ENCODE measurements at regions of chr19 and their contacts with region 1.

Region 1: GRCh38 chr19:13597640-13598039 is 91.4 kb upstream of the CACNA1A start:
- DNase-seq: peak; percentile 43 to 60 (median 49)
- H3K4me3 ChIP-seq: no peak overlapping the region
- H3K4me3 Mint-ChIP-seq: no peak overlapping the region
- H3K27ac ChIP-seq: no peak overlapping the region
- H3K27ac Mint-ChIP-seq: no peak overlapping the region
- H3K4me1 ChIP-seq: no peaks in the 10 kb centered on the region
- H3K4me1 Mint-ChIP-seq: no peaks in the 10 kb centered on the region
- H3K27me3 ChIP-seq: no peaks in the 10 kb centered on the region
- H3K27me3 Mint-ChIP-seq: peaks cover 2 to 10% (median 6%) of the 10 kb centered on the region in 3 donors
- CTCF ChIP-seq: peak; percentile 67

Region 2: GRCh38 chr19:13718733-13719132 is 121.1 kb after region 1 on chr19:
- intact Hi-C with region 1: loop called (anchors 2 to 5 kb)
- DNase-seq: no peak
- H3K4me3 ChIP-seq: no peak overlapping the region
- H3K4me3 Mint-ChIP-seq: no peak overlapping the region
- H3K27ac ChIP-seq: no peak overlapping the region
- H3K27ac Mint-ChIP-seq: no peak overlapping the region
- H3K4me1 ChIP-seq: no peaks in the 10 kb centered on the region
- H3K4me1 Mint-ChIP-seq: peaks cover 4% of the 10 kb centered on the region
- H3K27me3 ChIP-seq: peaks cover 0 to 7% of the 10 kb centered on the region in 2 donors
- H3K27me3 Mint-ChIP-seq: peaks cover 3 to 13% (median 8%) of the 10 kb centered on the region in 3 donors
- CTCF ChIP-seq: no peak